ENCODE measurements at regions of chr22 and their contacts with region 1.

Region 1: GRCh38 chr22:49992921-49993648 is 19.5 kb downstream of the IL17REL start:
- DNase-seq: peak; percentile 43
- H3K4me3 ChIP-seq: no peak overlapping the region
- H3K27ac ChIP-seq: no peak overlapping the region
- H3K4me1 ChIP-seq: no peaks in the 10 kb centered on the region
- H3K27me3 ChIP-seq: peaks cover 0 to 1% of the 10 kb centered on the region in 2 experiments
- CTCF ChIP-seq: peak; percentile 72 to 84
- POLR2A ChIP-seq: no peak

Region 2: GRCh38 chr22:49855251-49855911 is 137.7 kb before region 1 on chr22:
- CTCF ChIA-PET with region 1: no interaction called
- POLR2A ChIA-PET with region 1: no interaction called
- dilution Hi-C with region 1: no loop called
- intact Hi-C with region 1: no loop called
- DNase-seq: peak; percentile 29
- H3K4me3 ChIP-seq: peak overlapping the region; percentile 65 to 99 (median 69)
- H3K27ac ChIP-seq: peak overlapping the region; percentile 18
- H3K4me1 ChIP-seq: peaks cover 22% of the 10 kb centered on the region
- H3K27me3 ChIP-seq: peaks cover 0 to under 1% of the 10 kb centered on the region in 2 experiments
- CTCF ChIP-seq: no peak
- POLR2A ChIP-seq: no peak

Region 3: DNA sequence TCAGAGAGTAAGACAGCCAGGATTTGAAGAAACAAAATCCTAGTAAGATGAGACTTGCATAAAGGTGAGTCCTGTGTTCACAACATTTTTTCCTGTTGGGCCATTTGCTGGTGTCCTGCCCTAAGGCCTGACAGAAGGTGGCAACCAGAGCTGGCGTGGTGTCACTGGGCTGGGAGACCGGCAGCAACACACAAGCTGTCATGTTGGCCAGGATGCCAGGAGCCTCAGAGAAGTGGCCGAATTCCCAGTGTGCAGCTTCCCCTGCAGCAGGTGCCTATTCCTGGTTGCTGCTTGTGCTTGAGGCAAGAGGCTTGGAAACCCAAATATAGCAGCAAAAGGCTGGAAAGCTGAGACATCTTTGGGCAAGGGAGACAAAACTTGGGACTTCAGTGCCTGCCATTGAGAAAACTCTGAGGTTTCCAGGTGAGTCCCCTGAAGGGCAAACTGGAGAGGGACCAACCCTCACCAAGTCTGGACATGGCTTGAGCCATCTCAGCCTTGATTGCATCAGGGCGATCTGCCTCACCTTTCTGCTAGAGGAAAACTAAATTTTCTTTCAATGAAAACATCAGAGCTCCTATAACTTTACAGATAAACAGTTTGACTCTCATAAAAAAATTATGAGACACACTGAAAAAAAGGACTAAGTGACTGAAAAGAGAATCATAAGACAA is 100.7 kb before region 1 on chr22:
- CTCF ChIA-PET with region 1: no interaction called
- POLR2A ChIA-PET with region 1: no interaction called
- dilution Hi-C with region 1: no loop called
- intact Hi-C with region 1: no loop called
- DNase-seq: no peak
- H3K4me3 ChIP-seq: no peak overlapping the region
- H3K27ac ChIP-seq: no peak overlapping the region
- H3K4me1 ChIP-seq: no peaks in the 10 kb centered on the region
- H3K27me3 ChIP-seq: no peaks in the 10 kb centered on the region
- CTCF ChIP-seq: no peak
- POLR2A ChIP-seq: no peak

Region 4: GRCh38 chr22:49979587-49980264 is 13.4 kb before region 1 on chr22:
- CTCF ChIA-PET with region 1: interaction called, 21 read pairs
- POLR2A ChIA-PET with region 1: no interaction called
- dilution Hi-C with region 1: no loop called
- intact Hi-C with region 1: no loop called
- DNase-seq: peak; percentile 53
- H3K4me3 ChIP-seq: no peak overlapping the region
- H3K27ac ChIP-seq: no peak overlapping the region
- H3K4me1 ChIP-seq: peaks cover 4% of the 10 kb centered on the region
- H3K27me3 ChIP-seq: peaks cover 7 to 8% of the 10 kb centered on the region in 2 experiments
- CTCF ChIP-seq: peak; percentile 68 to 80
- POLR2A ChIP-seq: no peak

Region 5: GRCh38 chr22:50058061-50058905 is 65.2 kb after region 1 on chr22 and contains the start of gene TTLL8:
- CTCF ChIA-PET with region 1: no interaction called
- POLR2A ChIA-PET with region 1: no interaction called
- dilution Hi-C with region 1: no loop called
- intact Hi-C with region 1: no loop called
- DNase-seq: no peak
- H3K4me3 ChIP-seq: no peak within 1 kb of the TSS
- H3K27ac ChIP-seq: no peak within 1 kb of the TSS
- H3K4me1 ChIP-seq: no peaks in the 10 kb centered on the region
- H3K27me3 ChIP-seq: peaks cover 10 to 19% of the 10 kb centered on the region in 2 experiments
- CTCF ChIP-seq: no peak
- POLR2A ChIP-seq: no peak
- total RNA-seq, gene TTLL8: not detected in 2 replicates

Measured in endothelial cell of umbilical vein (primary cell).